AG04449 (cell line): ENCODE measurements at regions of chr2 and their contacts with region 1.

Region 1: DNA sequence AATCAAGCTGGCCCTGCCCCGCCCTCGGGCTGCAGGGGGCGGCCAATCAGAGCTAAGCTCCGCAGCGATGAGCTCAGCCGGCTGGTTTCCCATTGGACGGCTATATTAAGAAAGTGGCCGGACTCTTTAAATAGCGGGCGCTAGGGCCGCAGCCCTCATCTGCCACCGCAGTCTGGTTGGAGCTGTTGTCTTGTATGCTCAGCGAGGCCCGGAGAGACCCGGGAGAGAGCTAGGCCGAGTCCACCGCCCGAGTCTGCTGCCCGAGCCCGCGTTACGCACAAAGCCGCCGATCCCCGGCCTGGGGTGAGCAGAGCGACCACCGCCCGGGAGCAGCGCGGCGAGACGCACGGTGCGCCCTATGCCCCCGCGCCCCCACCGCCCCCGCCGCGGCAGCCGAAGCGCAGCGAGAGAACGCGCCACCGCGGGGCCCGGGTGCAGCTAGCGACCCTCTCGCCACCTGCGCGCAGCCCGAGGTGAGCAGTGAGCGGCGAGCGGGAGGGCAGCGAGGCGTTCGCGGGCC is at the start of gene RHOB:
- DNase-seq: peak; percentile 90
- H3K4me3 ChIP-seq: peak within 1 kb of the TSS; percentile 89
- CTCF ChIP-seq: no peak

Region 2: DNA sequence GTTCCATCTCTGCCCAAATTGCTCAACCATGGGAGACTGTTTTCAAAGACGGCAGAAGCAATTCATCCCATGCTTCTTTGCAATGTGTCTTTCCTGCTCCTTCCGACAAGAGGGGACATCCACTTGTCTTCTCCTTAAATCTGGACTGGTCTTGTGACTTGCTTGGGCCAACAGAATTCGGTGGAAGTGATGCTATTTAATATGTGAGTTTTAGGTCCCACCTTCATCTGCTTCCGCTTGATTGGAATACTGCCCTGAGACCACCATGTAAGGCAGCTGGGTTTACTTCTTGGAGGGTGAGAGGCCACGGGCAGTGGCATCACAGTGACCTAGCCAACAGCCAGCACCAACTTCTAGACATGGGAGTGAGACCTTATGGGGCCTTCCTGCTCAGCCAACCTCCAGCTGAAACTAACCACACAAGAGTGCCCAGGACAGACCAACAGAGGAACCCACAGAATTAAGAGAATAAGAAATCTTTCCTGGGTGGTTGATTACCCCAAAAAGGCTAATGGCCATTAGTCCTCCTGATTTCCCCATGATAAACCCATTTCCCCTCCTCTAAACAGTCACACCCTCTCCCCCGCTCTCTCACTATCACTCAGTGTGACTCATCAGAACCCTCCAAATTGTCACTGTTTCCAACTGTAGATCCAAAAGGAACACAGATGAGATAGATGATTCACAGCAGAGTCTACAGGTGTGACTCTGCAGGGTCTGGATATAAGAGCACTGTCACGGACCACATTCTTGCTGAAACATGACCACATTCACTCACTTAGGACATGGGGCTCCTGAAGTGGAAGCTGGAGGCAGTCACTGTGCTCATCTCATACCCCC is 16.3 kb before region 1 on chr2:
- CTCF ChIA-PET with region 1: interaction called, 11 read pairs
- POLR2A ChIA-PET with region 1: interaction called, 113 read pairs
- DNase-seq: no peak
- H3K4me3 ChIP-seq: no peak overlapping the region
- CTCF ChIP-seq: no peak

Region 3: GRCh38 chr2:20568501-20569463 is 121.8 kb after region 1 on chr2:
- CTCF ChIA-PET with region 1: no interaction called
- POLR2A ChIA-PET with region 1: interaction called, 24 read pairs
- DNase-seq: no peak
- H3K4me3 ChIP-seq: no peak overlapping the region
- CTCF ChIP-seq: no peak

Region 4: DNA sequence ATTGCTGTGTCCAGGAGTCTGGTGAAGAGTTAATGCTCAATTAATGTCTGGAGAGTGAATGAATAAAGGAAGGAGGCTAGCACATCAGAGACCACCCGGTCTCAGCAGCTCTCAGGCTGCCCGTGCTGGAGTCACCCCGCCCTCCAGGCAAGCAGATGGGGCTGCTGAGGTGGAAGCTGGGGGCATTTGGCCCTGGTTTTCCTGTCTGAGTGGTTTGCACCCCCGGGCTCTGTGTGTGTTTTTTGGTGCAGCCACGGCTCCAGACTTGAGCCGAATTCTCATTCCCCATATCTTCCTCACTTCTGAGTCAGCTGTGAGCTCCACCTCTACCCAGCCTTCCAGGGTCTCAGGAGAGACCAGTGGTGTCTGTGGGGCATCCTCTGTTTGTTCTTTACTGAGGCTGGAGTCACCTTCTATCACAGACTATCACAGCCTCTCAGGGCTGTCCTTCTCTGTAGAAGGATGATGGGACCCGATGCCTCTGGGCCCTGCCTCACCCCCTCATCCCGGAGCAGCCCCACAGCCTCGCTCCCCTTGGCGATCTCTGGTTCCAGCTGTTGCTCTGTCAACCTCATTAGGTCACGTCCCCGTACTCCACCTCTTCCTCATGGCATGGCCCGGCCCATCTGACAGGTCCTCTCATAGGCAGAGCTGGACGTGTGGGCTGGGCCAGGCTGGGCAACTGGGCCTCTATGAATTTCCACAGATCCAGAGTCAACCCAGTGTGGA is 143.2 kb after region 1 on chr2:
- CTCF ChIA-PET with region 1: interaction called, 3 read pairs
- POLR2A ChIA-PET with region 1: interaction called, 33 read pairs
- DNase-seq: no peak
- H3K4me3 ChIP-seq: no peak overlapping the region
- CTCF ChIP-seq: no peak

Region 5: DNA sequence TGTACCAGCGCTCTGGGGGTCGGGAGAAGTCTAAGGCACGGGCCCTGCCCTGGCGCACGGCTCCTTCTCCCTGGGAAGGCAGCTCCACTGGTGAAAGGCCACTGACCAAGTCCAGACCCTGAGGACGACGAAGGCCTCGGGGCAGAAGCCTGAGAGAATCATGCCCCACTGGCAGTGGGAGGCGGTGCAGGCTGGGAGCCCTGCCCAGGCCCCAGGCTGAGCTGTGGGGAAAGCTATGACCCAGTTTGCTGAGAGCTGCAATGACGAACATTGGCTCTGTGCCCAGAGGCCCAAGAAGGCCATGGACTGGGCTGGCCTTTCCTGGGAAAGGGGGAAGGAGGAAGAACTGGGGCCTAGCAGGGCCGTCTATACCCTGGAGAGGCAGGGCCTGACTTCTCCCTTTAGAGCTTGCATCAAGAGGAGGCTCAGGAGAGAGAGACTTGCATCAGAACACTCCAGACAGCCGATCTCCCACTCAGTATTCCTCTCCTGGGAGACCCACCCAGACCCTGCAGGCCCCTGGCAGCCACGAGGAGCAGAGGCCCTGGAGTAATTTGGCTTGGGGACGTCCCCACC is 171.0 kb after region 1 on chr2:
- CTCF ChIA-PET with region 1: interaction called, 7 read pairs
- POLR2A ChIA-PET with region 1: interaction called, 62 read pairs
- DNase-seq: peak; percentile 95
- H3K4me3 ChIP-seq: no peak overlapping the region
- CTCF ChIP-seq: peak; percentile 59

Region 6: DNA sequence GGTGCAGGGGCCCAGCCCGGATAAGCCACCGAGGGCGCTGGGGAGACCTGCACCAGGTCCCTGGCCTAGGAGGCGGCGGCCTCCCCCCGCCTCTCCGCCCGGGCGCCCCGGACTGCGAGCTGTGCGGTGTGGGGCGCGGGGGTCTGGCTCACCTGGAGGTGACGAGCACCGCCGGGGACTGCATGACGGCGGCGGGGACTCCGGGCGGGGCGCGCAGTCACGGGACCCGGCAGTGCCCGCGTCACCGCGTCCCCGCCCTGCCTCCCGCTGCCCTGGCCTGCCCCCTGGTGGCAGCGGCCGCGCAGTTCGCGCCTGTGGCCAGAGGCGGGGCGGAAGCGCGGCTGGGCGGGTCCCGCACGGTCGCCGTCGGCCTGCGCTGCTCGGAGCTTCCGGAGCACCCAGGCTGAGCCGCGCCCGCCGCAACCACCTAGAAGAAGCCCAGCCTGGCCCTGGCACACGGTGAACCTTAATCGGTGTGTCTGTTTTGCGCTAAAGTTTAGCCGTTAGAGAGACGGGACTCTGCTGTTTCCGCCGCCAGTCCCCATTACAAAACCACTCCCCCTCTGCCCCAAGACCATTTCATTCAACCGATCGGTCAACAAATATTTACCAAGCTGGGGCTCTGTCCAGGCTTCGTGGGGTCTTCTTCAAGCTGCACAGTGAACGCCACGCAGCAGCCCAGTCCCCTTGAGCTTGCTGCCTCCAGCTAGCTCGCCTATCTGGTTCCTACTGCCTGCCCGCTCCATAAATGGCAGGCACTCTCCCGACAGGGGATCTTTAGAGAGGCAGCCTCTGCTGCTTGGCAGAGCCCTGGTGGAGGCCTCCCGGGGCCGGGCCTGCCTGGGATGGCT is 204.1 kb after region 1 on chr2 and contains the start of gene HS1BP3:
- CTCF ChIA-PET with region 1: interaction called, 88 read pairs
- POLR2A ChIA-PET with region 1: interaction called, 35 read pairs
- DNase-seq: no peak
- H3K4me3 ChIP-seq: peak within 1 kb of the TSS; percentile 91
- CTCF ChIP-seq: peak; percentile 81